ENCODE measurements at regions of chr21 and their contacts with region 1.

Region 1: DNA sequence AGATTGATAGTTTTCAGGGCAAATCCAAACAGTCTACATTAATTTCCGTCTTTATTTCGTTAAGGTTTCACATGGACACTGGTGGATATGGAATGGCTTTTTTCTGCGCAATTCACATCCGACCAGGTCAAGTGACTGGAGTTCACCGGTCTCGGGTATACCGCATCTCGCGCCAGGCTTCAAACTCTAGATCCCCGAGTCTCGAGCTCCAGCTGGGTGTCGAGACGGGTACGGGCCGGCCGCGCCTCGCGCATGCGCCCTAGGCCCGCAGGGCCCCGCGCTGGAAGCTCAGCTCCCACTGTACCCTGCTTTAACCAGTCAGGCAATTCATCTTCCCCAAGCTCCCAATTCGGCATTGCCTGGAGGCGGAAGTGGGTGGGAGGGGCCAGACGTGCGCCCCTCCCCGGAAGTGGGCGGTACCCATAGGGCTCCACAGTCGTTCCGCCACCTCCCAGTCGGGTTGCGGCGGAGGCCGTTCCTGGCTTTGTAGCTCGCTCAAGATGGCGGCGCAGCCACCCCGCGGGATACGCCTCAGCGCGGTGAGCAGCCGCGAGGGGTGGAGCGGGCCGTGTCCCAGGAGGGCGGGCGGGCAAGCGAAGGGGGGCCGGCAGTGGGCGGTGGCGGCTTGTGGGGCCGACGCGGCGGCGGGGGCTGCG is at the start of gene MORC3:
- DNase-seq: peak; percentile 99
- H3K4me3 ChIP-seq: peak within 1 kb of the TSS; percentile 80
- H3K27ac ChIP-seq: peak within 1 kb of the TSS; percentile 94
- H3K27me3 ChIP-seq: no peaks in the 10 kb centered on the region
- CTCF ChIP-seq: no peak
- polyA plus RNA-seq, gene MORC3: 20.7 and 31.6 TPM in 2 replicates

Region 2: DNA sequence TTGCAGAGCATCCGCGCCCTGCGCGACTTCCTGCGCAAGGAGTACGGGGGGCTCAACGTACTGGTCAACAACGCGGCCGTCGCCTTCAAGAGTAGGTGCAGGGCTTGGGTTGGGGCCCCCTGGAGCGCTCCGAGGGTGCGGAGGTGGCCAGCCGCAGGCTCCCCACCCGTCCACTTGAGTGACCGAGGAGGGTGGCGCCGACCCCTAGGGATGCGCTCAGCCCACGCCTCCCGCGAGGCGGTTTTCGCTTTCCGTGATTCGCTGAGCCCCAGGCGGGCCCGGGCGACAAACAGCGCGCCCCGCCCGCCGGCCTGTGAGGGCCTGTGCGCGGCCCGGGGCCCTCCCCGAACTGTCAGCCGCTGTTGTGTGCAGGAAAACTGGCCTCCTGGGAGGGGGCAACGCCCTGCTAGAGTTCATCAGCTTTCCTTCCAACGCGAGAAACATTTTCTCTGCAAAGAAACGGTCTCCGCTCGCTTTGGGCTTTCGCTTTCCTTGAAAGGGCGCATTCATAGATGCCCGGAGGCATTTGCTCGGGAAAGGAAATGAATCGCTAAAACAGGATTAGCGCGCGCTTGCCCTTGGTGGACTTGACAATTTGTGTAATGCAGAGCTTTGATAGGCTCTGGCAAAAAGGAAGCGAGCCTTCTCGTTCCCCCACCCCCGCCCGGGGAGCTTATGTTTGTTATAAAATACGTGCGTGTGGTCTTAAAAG is 184.3 kb before region 1 on chr21:
- CTCF ChIA-PET with region 1: interaction called, 12 read pairs
- POLR2A ChIA-PET with region 1: interaction called, 11 read pairs
- DNase-seq: no peak
- H3K4me3 ChIP-seq: peak overlapping the region; percentile 76
- H3K27ac ChIP-seq: peak overlapping the region; percentile 84
- H3K27me3 ChIP-seq: no peaks in the 10 kb centered on the region
- CTCF ChIP-seq: no peak

Region 3: DNA sequence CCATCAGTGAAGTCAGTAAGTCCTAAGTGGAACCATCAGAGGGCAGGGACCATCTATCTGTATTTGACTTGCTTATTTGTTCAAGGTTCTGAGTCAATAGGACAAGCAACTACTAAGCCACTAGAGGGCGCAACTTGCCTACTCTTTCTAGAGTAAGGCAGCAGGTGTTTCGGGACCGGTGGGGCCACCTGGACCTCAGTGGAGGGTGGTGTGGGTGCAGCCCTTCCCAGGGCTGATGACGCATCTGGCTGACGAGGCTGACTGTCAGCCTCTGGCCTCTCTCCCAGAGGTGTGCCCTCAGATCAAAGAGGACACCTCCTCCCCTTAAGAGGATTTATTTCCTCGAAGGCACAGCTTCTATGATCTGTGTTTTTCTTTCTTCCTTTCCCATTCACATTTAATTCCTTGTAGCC is 178.4 kb before region 1 on chr21:
- CTCF ChIA-PET with region 1: interaction called, 12 read pairs
- POLR2A ChIA-PET with region 1: interaction called, 11 read pairs
- DNase-seq: peak; percentile 72
- H3K4me3 ChIP-seq: no peak overlapping the region
- H3K27ac ChIP-seq: no peak overlapping the region
- H3K27me3 ChIP-seq: no peaks in the 10 kb centered on the region
- CTCF ChIP-seq: peak; percentile 86

Region 4: GRCh38 chr21:36211660-36212512 is 108.0 kb before region 1 on chr21:
- CTCF ChIA-PET with region 1: interaction called, 5 read pairs
- POLR2A ChIA-PET with region 1: interaction called, 10 read pairs
- DNase-seq: peak; percentile 67
- H3K4me3 ChIP-seq: no peak overlapping the region
- H3K27ac ChIP-seq: peak overlapping the region; percentile 89
- H3K27me3 ChIP-seq: no peaks in the 10 kb centered on the region
- CTCF ChIP-seq: no peak

Region 5: GRCh38 chr21:36288651-36289243 is 31.1 kb before region 1 on chr21:
- CTCF ChIA-PET with region 1: no interaction called
- POLR2A ChIA-PET with region 1: interaction called, 15 read pairs
- DNase-seq: no peak
- H3K4me3 ChIP-seq: peak overlapping the region; percentile 44
- H3K27ac ChIP-seq: peak overlapping the region; percentile 84
- H3K27me3 ChIP-seq: no peaks in the 10 kb centered on the region
- CTCF ChIP-seq: no peak